ENCODE measurements at regions of chr19 and their contacts with region 1.

Region 1: DNA sequence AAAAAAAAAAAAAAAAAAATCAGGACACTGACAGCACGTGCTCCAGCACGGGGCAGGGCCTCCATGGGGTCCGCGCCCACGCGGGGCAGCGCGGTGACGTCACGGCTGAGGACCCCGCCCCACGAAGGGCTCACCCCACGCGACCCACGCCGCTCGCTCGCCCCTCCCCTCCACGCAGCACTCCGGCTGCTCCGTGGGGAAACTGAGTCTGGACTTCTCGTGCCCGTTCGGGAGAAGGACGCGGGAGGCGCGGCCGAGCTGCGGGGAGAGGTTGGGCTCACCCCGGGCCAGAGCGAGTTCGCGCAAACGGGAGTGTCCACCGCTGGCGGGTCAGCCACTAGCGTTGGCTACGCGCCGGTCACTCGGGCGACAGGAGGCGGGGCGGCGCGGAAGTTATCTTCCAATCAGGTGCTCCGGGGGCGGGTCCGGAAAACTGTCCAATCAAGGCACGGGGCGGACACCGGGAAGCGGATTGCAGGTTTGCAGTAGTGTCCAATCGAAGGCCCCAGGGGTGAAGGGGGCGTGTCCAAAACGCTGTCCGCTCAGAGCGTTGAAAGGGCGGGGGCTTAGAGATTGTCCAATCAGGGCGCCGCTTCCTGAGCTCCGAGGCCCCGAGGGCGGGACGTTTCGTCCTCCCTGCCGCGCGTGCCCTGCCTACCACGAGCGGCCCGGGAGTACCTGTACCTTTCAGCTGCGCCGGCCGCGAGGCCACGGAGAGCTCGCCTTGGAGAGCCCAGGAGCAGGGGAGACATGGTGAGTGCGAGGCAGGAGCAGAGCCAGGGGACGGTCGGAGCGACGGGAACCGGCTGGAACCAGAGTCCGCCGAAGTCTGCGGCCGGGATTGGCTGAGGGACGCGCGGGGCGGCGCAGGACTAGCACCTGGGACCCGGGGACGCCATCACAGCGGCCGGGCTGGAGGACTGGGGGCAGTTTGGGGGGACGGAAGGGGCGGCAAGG is at the start of gene ZNF57:
- DNase-seq: peak; percentile 99 to 100
- H3K4me3 ChIP-seq: peak within 1 kb of the TSS; percentile 71 to 82
- H3K27ac ChIP-seq: peak within 1 kb of the TSS; percentile 63 to 69
- H3K4me1 ChIP-seq: peaks cover 0 to 3% of the 10 kb centered on the region in 2 donors
- H3K27me3 ChIP-seq: no peaks in the 10 kb centered on the region
- CTCF ChIP-seq: peak in 1 of 3 experiments; percentile 12
- total RNA-seq, gene ZNF57: 9.8 TPM

Region 2: DNA sequence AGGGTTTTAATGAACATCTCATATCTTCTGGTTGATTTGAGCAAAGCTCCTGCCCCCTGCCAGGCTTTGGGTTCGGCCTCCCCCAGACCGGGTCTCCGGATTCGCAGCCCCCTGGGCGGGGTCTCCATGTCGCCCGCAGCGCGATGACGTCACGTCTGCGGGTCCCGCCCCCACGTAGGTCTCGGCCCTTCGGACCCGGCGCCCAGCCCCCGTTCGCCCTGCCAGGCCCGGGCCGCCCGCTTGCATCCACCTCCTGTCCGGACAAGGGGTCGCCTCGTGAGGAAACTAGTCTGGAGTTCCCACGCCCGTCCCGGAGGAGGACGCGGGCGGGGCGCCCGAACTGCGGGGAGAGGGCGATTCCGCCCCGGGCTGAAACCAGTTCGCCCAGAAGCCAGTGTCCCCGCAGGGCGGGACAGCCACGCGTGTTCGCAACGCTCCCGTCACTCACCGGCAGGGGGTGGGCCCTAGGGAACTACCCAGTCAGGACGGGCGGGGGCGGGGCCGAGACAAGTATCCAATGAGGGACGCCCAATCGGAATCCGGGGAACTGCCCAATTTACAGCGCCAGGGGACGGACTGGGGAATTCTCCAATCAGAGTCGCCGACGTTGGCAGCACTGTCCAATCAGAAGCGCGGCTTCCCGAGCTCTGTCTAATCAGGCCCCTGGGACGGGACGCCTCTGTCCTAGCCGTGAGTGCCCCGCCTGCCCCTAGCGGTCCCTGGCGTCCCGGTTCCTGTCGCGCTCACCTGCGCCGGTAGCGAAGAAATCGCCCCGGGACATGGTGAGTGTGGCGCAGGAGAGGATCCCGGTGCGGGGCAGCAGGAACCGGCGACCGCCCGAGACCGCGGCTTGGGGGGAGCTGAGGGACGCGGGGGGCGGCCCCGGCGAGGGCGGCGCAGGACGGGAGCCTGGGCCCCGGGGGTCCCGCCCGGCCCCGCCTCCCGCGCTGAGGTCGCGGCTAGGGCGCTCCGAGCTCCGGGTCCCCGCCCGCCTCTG is 59.5 kb before region 1 on chr19 and contains the start of gene ZNF555:
- intact Hi-C with region 1: loop called (anchors 1 kb)
- DNase-seq: peak; percentile 99 to 100
- H3K4me3 ChIP-seq: peak within 1 kb of the TSS; percentile 96 to 99
- H3K27ac ChIP-seq: peak within 1 kb of the TSS; percentile 95
- H3K4me1 ChIP-seq: peaks cover 0 to 10% of the 10 kb centered on the region in 2 donors
- H3K27me3 ChIP-seq: no peaks in the 10 kb centered on the region
- CTCF ChIP-seq: peak; percentile 32 to 74 (median 61)
- total RNA-seq, gene ZNF555: 6.8 TPM

Region 3: GRCh38 chr19:2869618-2870017 is 31.0 kb before region 1 on chr19:
- intact Hi-C with region 1: no loop called
- DNase-seq: no peak
- H3K4me3 ChIP-seq: no peak overlapping the region
- H3K27ac ChIP-seq: no peak overlapping the region
- H3K4me1 ChIP-seq: no peaks in the 10 kb centered on the region
- H3K27me3 ChIP-seq: no peaks in the 10 kb centered on the region
- CTCF ChIP-seq: no peak

Region 4: GRCh38 chr19:2944775-2945574 is 44.4 kb after region 1 on chr19 and contains the start of gene ZNF77:
- intact Hi-C with region 1: loop called (anchors 1 kb)
- DNase-seq: peak; percentile 95 to 99
- H3K4me3 ChIP-seq: peak within 1 kb of the TSS; percentile 97
- H3K27ac ChIP-seq: peak within 1 kb of the TSS; percentile 80 to 91
- H3K4me1 ChIP-seq: peaks cover 6 to 19% of the 10 kb centered on the region in 2 donors
- H3K27me3 ChIP-seq: no peaks in the 10 kb centered on the region
- CTCF ChIP-seq: peak in 2 of 3 experiments; percentile 9 to 11
- total RNA-seq, gene ZNF77: 3.0 TPM

Region 5: DNA sequence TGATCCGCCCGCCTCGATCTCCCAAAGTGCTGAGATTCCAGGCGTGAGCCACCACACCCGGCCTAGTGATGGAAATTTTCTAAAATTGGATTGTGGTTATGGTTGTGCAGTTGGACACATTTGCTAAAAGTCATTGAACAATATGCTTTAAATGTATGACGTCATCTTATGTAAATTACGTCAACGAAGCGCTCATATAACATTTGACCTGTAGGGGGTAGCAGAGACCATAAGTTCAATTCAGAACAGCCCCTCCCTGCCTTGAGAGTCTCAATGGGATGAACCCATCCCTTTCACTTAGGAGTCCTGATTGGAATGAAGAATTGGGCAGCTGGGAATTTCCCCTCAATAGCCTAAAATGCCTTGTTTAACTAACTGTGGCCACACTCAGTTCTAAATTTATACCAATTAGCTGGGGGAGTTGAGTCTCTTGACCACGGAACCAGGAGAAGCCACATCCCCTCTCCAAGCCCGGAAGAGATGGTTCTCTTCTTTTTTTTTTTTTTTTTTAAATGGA is 61.5 kb after region 1 on chr19:
- intact Hi-C with region 1: no loop called
- DNase-seq: peak in 1 of 2 donors; percentile 75
- H3K4me3 ChIP-seq: no peak overlapping the region
- H3K27ac ChIP-seq: no peak overlapping the region
- H3K4me1 ChIP-seq: no peaks in the 10 kb centered on the region
- H3K27me3 ChIP-seq: no peaks in the 10 kb centered on the region
- CTCF ChIP-seq: peak; percentile 72 to 93 (median 78)